ENCODE measurements at regions of chrX and their contacts with region 1.

Region 1: GRCh38 chrX:77768787-77769186 is 17.2 kb downstream of the ATRX start:
- DNase-seq: peak; percentile 76
- H3K4me3 Mint-ChIP-seq: peak overlapping the region; percentile 53
- H3K27ac Mint-ChIP-seq: peak overlapping the region; percentile 84
- H3K4me1 Mint-ChIP-seq: peaks cover 8% of the 10 kb centered on the region
- H3K27me3 Mint-ChIP-seq: no peaks in the 10 kb centered on the region

Region 2: GRCh38 chrX:77742788-77743476 is 25.9 kb before region 1 on chrX:
- intact Hi-C with region 1: loop called (anchors 2 kb)
- DNase-seq: no peak
- H3K4me3 Mint-ChIP-seq: no peak overlapping the region
- H3K27ac Mint-ChIP-seq: no peak overlapping the region
- H3K4me1 Mint-ChIP-seq: peaks cover 22% of the 10 kb centered on the region
- H3K27me3 Mint-ChIP-seq: no peaks in the 10 kb centered on the region

Region 3: GRCh38 chrX:77785486-77786364 is 16.9 kb after region 1 on chrX and contains the start of gene ATRX:
- intact Hi-C with region 1: no loop called
- DNase-seq: peak; percentile 92
- H3K4me3 Mint-ChIP-seq: peak within 1 kb of the TSS; percentile 99
- H3K27ac Mint-ChIP-seq: peak within 1 kb of the TSS; percentile 100
- H3K4me1 Mint-ChIP-seq: peaks cover 15% of the 10 kb centered on the region
- H3K27me3 Mint-ChIP-seq: no peaks in the 10 kb centered on the region
- total RNA-seq, gene ATRX: 62.3 and 72.9 TPM in 2 replicates